ENCODE measurements at regions of chr5 and their contacts with region 1.

Region 1: GRCh38 chr5:9544502-9545135 is 1.3 kb downstream of the SEMA5A start:
- DNase-seq: peak; percentile 83 to 92 (median 86)
- ATAC-seq: peak; percentile 72 to 78 (median 76)
- H3K4me3 ChIP-seq: peak overlapping the region; percentile 65 to 94 (median 78)
- H3K27ac ChIP-seq: peak overlapping the region; percentile 34 to 94 (median 83)
- H3K4me1 ChIP-seq: peaks cover 0 to 57% (median 12%) of the 10 kb centered on the region in 12 donors
- H3K27me3 ChIP-seq: peaks cover 0 to 29% (median 0%) of the 10 kb centered on the region in 9 donors
- CTCF ChIP-seq: peak; percentile 69 to 91 (median 78)
- POLR2A ChIP-seq: peak in 1 of 2 donors; percentile 39

Region 2: DNA sequence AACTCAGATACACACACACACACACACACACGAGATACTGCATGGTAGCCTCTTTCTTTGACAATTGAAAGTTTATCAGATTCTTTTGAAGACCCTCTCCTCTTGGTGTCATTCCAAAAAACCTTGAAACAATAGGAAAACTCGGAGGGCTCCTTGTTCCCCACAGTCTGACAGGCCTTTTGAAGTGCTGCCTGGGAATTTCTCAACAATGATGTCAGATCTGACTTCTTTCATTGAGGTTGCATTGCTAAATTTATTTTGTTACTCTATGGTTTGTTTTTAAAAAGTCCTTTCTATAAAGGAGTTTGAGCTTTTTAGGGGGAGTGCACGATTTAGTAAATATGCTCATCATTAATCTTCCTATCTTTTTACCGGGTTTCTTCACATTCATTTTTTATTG is 582.7 kb before region 1 on chr5:
- intact Hi-C with region 1: no loop called
- DNase-seq: no peak
- ATAC-seq: no peak
- H3K4me3 ChIP-seq: no peak overlapping the region
- H3K27ac ChIP-seq: no peak overlapping the region
- H3K4me1 ChIP-seq: no peaks in the 10 kb centered on the region
- H3K27me3 ChIP-seq: no peaks in the 10 kb centered on the region
- CTCF ChIP-seq: no peak
- POLR2A ChIP-seq: no peak

Region 3: GRCh38 chr5:9188131-9188530 is 356.5 kb before region 1 on chr5:
- intact Hi-C with region 1: no loop called
- DNase-seq: no peak
- ATAC-seq: peak in 1 of 4 donors; percentile 46
- H3K4me3 ChIP-seq: no peak overlapping the region
- H3K27ac ChIP-seq: no peak overlapping the region
- H3K4me1 ChIP-seq: no peaks in the 10 kb centered on the region
- H3K27me3 ChIP-seq: no peaks in the 10 kb centered on the region
- CTCF ChIP-seq: no peak
- POLR2A ChIP-seq: no peak

Region 4: GRCh38 chr5:9265441-9266175 is 279.0 kb before region 1 on chr5:
- intact Hi-C with region 1: loop called in 1 of 10 experiments (anchors 5 kb)
- DNase-seq: peak; percentile 27 to 63 (median 49)
- ATAC-seq: peak; percentile 89 to 94 (median 92)
- H3K4me3 ChIP-seq: no peak overlapping the region
- H3K27ac ChIP-seq: peak overlapping the region; percentile 48 to 80 (median 62)
- H3K4me1 ChIP-seq: peaks cover 0 to 25% (median 5%) of the 10 kb centered on the region in 12 donors
- H3K27me3 ChIP-seq: no peaks in the 10 kb centered on the region
- CTCF ChIP-seq: no peak
- POLR2A ChIP-seq: no peak

Region 5: GRCh38 chr5:9361835-9362234 is 182.8 kb before region 1 on chr5:
- intact Hi-C with region 1: loop called in 9 of 10 experiments (anchors 2 to 10 kb)
- DNase-seq: peak in 3 of 5 donors; percentile 30 to 35 (median 32)
- ATAC-seq: peak in 2 of 4 donors; percentile 52 to 56
- H3K4me3 ChIP-seq: no peak overlapping the region
- H3K27ac ChIP-seq: no peak overlapping the region
- H3K4me1 ChIP-seq: peaks cover 0 to 31% (median 11%) of the 10 kb centered on the region in 12 donors
- H3K27me3 ChIP-seq: no peaks in the 10 kb centered on the region
- CTCF ChIP-seq: peak; percentile 41 to 66 (median 54)
- POLR2A ChIP-seq: no peak

Region 6: DNA sequence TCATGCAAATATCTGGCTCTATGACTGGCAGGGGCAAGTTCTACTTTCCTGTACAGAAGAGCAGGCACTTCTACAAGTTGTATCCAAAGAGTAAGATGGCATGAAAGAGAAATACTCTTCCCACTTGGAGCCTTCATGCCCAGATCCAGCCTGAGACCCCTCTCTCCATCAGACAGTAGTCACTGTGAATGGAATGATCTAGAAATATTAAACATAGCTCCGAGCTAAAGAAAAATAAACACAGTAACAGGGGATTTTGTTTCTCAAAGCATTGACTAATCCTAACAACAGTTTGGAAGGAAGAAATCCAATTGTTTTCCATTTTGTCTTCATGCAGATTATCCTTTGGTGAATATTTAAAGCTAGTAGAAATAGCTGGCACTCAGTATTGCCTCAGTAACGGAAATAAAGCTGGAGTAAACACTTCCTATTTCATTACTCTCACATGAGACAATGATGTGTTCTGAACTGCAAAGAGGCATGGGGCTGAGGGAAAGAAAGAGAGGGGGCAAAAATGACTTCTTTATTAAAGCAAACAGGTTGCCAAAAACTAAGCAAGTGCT is 98.7 kb before region 1 on chr5:
- intact Hi-C with region 1: loop called in 2 of 10 experiments (anchors 5 kb)
- DNase-seq: no peak
- ATAC-seq: peak in 3 of 4 donors; percentile 57 to 70 (median 60)
- H3K4me3 ChIP-seq: no peak overlapping the region
- H3K27ac ChIP-seq: peak overlapping the region in 4 of 12 donors; percentile 6 to 40 (median 27)
- H3K4me1 ChIP-seq: peaks cover 0 to 17% (median 8%) of the 10 kb centered on the region in 12 donors
- H3K27me3 ChIP-seq: no peaks in the 10 kb centered on the region
- CTCF ChIP-seq: no peak
- POLR2A ChIP-seq: no peak

Region 7: GRCh38 chr5:9468060-9468388 is 76.6 kb before region 1 on chr5:
- intact Hi-C with region 1: no loop called
- DNase-seq: no peak
- ATAC-seq: no peak
- H3K4me3 ChIP-seq: no peak overlapping the region
- H3K27ac ChIP-seq: no peak overlapping the region
- H3K4me1 ChIP-seq: peaks cover 0 to 26% (median 4%) of the 10 kb centered on the region in 12 donors
- H3K27me3 ChIP-seq: no peaks in the 10 kb centered on the region
- CTCF ChIP-seq: no peak
- POLR2A ChIP-seq: no peak

Region 8: GRCh38 chr5:9513827-9514226 is 30.8 kb before region 1 on chr5:
- intact Hi-C with region 1: loop called in 1 of 10 experiments (anchors 1 kb)
- DNase-seq: no peak
- ATAC-seq: no peak
- H3K4me3 ChIP-seq: no peak overlapping the region
- H3K27ac ChIP-seq: peak overlapping the region in 10 of 12 donors; percentile 2 to 88 (median 66)
- H3K4me1 ChIP-seq: peaks cover 0 to 53% (median 14%) of the 10 kb centered on the region in 12 donors
- H3K27me3 ChIP-seq: no peaks in the 10 kb centered on the region
- CTCF ChIP-seq: peak in 4 of 12 donors; percentile 26 to 42 (median 31)
- POLR2A ChIP-seq: no peak

Region 9: GRCh38 chr5:9622971-9623421 is 78.4 kb after region 1 on chr5:
- intact Hi-C with region 1: loop called in 3 of 10 experiments (anchors 5 kb)
- DNase-seq: no peak
- ATAC-seq: peak; percentile 46 to 78 (median 70)
- H3K4me3 ChIP-seq: no peak overlapping the region
- H3K27ac ChIP-seq: peak overlapping the region in 7 of 12 donors; percentile 12 to 89 (median 68)
- H3K4me1 ChIP-seq: peaks cover 0 to 33% (median 16%) of the 10 kb centered on the region in 12 donors
- H3K27me3 ChIP-seq: no peaks in the 10 kb centered on the region
- CTCF ChIP-seq: no peak
- POLR2A ChIP-seq: no peak

Region 10: GRCh38 chr5:10133830-10134229 is 589.2 kb after region 1 on chr5:
- intact Hi-C with region 1: loop called in 1 of 10 experiments (anchors 10 kb)
- DNase-seq: no peak
- ATAC-seq: no peak
- H3K4me3 ChIP-seq: no peak overlapping the region
- H3K27ac ChIP-seq: no peak overlapping the region
- H3K4me1 ChIP-seq: no peaks in the 10 kb centered on the region
- H3K27me3 ChIP-seq: no peaks in the 10 kb centered on the region
- CTCF ChIP-seq: no peak
- POLR2A ChIP-seq: no peak